ENCODE measurements at regions of chr12 and their contacts with region 1.

Region 1: DNA sequence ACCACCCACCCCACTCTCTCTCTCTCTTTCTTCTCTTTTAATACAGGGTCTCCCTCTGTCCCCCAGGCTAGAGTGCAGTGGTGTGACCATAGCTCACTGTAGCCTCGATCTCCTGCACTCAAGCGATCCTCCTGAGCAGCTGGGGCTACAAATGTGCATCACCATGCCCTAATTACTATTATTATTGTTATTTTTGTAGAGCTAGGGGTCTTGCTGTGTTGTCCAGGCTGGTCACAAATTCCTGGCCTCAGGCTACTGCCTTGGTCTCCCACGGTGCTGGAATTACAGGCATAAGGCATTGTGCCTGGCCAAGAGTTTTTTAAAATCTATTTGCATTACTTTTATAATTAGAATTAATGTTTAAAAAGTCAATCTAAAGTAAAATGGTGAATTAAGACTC is 23.0 kb upstream of the TUBA1B start:
- DNase-seq: no peak
- ATAC-seq: no peak
- H3K4me3 ChIP-seq: no peak overlapping the region
- H3K27ac ChIP-seq: no peak overlapping the region
- H3K4me1 ChIP-seq: no peaks in the 10 kb centered on the region
- H3K27me3 ChIP-seq: no peaks in the 10 kb centered on the region
- CTCF ChIP-seq: no peak

Region 2: GRCh38 chr12:49138587-49138986 is 15.6 kb before region 1 on chr12:
- CTCF ChIA-PET with region 1: no interaction called
- POLR2A ChIA-PET with region 1: interaction called, 15 read pairs
- in situ Hi-C with region 1: no loop called
- intact Hi-C with region 1: no loop called
- DNase-seq: no peak
- ATAC-seq: no peak
- H3K4me3 ChIP-seq: no peak overlapping the region
- H3K27ac ChIP-seq: no peak overlapping the region
- H3K4me1 ChIP-seq: no peaks in the 10 kb centered on the region; the same call in 1 of the 2 replicates
- H3K27me3 ChIP-seq: no peaks in the 10 kb centered on the region
- CTCF ChIP-seq: no peak

Region 3: DNA sequence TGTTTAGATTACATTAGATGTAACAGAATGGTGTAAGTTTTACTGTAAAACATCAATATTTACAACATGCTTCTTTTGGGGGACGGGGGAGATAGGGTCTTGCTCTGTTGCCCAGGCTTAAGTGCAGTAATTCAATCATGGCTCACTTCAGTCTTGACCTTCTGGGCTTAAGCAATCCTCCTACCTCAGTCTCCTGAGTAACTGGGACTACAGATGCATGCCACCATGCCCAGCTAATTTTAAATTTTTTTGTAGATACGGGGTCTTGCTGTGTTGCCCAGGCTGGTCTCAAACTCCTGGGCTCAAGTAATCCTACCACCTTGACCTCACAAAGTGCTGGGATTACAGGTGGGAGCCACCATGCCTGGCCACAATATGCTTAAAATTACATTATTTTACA is 10.9 kb after region 1 on chr12:
- CTCF ChIA-PET with region 1: no interaction called
- POLR2A ChIA-PET with region 1: no interaction called
- in situ Hi-C with region 1: no loop called
- intact Hi-C with region 1: no loop called
- DNase-seq: no peak
- ATAC-seq: no peak
- H3K4me3 ChIP-seq: no peak overlapping the region
- H3K27ac ChIP-seq: no peak overlapping the region
- H3K4me1 ChIP-seq: no peaks in the 10 kb centered on the region
- H3K27me3 ChIP-seq: no peaks in the 10 kb centered on the region
- CTCF ChIP-seq: no peak